Kidney (tissue), 22 donors: ENCODE measurements at regions of chr20 and their contacts with region 1.

Region 1: DNA sequence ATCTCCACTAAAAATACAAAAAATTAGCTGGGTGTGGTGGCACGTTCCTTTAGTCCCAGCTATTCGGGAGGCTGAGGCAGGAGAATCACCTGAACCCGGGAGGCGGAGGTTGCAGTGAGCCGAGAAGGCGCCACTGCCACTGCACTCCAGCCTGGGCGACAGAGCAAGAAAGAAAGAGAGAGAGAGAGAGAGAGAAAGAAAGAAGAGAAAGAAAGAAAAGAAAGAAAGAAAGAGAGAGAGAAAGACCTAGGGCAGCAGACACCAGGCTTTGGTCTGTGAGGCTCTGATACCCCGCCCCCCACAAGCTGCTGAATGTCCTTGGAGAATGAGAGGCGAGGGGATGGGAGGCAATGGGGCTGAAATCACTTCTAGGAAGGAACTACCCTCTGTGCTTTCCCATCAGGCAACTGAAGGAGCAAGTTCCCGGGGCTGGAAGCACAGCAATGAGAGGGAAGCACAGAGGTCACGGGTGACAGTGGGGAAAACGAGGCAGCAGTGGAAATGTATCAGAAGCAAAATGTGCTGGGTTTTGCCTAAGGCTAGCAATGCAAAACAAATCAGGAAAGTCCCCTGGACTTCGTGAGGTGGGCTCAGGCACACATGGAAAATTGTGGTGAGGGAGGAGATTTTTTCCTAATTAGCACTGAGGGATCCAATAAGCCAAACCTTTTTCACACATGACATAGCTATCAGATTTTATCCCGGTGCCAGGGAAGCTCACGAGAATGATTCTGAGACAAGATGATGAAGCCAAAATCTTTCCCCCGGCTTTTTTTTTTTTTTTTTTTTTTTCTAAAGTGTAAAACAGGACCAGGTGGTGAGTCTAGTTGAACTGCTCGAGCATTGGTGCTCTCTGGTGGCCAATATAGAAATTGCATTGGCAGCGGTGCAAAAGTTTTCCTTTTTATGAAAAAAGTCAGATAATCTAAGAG is 16.9 kb upstream of the ARFGEF2 start:
- DNase-seq: peak in 4 of 5 donors; percentile 56 to 78 (median 71)
- H3K4me3 ChIP-seq: no peak overlapping the region
- H3K27ac ChIP-seq: no peak overlapping the region
- H3K4me1 ChIP-seq: peaks cover 0 to 4% (median 0%) of the 10 kb centered on the region in 3 donors
- H3K27me3 ChIP-seq: no peaks in the 10 kb centered on the region
- CTCF ChIP-seq: peak; percentile 93

Region 2: DNA sequence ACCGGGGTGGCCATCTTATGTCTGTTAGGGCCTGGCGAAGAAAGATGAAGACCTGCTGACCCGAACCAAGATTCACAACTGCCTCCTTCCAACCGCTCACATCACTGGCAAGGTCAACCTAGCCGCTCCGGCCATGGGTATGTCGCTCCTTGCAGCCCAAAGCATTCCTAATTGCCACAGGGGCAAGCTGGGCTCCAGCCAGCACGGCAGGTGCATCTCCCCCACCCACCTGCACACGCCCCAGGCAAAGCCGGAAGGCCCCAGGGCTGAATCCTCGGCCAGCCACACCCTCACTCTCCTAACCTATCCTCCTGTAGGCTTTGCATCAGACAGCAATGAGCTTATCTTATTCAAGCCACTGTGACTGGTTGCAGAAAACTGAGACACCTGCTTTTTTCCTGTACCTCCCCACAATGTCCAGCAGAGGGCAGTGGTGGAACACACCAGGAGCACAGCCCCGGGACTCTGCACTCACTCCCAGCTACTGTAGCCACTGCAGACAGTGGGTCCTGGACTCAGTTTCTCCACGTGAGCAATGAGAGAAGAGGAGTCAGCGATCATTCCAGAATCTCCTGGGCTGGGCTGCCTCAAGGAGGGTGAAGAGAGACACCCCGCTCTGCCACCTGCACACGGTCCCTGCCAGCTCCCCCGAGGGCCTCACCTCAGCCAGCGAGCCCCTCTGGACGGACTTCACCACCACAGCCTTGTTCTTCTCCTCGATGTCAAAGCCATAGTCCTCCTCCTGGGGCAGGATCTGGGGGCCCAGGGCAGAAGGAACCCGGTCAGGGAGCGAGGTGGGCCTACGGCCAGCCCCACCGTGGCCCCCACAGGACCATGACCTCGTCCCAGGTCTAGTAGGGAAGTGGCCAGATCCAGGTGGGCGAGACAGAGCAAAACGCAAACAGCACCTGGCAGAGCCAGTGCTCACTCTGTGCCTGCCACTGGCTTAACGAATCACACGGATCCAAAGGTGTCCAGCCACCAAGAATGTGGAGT is 246.9 kb before region 1 on chr20:
- intact Hi-C with region 1: loop called (anchors 2 kb)
- DNase-seq: peak in 4 of 5 donors; percentile 76 to 93 (median 84)
- H3K4me3 ChIP-seq: no peak overlapping the region
- H3K27ac ChIP-seq: no peak overlapping the region
- H3K4me1 ChIP-seq: peaks cover 0 to 12% (median 0%) of the 10 kb centered on the region in 3 donors
- H3K27me3 ChIP-seq: no peaks in the 10 kb centered on the region
- CTCF ChIP-seq: peak; percentile 97

Region 3: GRCh38 chr20:48999890-49000870 is 95.5 kb after region 1 on chr20:
- intact Hi-C with region 1: no loop called
- DNase-seq: no peak
- H3K4me3 ChIP-seq: no peak overlapping the region
- H3K27ac ChIP-seq: no peak overlapping the region
- H3K4me1 ChIP-seq: peaks cover 0 to 6% (median 0%) of the 10 kb centered on the region in 3 donors
- H3K27me3 ChIP-seq: no peaks in the 10 kb centered on the region
- CTCF ChIP-seq: no peak